GM12878 (cell line): ENCODE measurements at regions of chr19 and their contacts with region 1.

Region 1: GRCh38 chr19:38464421-38465082 is 31.1 kb downstream of the RYR1 start:
- DNase-seq: no peak
- ATAC-seq: no peak
- H3K4me3 ChIP-seq: no peak overlapping the region
- H3K27ac ChIP-seq: no peak overlapping the region
- H3K4me1 ChIP-seq: no peaks in the 10 kb centered on the region
- H3K27me3 ChIP-seq: no peaks in the 10 kb centered on the region; a peak in 1 of 4 replicates
- CTCF ChIP-seq: no peak
- EP300 ChIP-seq: no peak
- POLR2A ChIP-seq: no peak
- RAD21 ChIP-seq: no peak

Region 2: DNA sequence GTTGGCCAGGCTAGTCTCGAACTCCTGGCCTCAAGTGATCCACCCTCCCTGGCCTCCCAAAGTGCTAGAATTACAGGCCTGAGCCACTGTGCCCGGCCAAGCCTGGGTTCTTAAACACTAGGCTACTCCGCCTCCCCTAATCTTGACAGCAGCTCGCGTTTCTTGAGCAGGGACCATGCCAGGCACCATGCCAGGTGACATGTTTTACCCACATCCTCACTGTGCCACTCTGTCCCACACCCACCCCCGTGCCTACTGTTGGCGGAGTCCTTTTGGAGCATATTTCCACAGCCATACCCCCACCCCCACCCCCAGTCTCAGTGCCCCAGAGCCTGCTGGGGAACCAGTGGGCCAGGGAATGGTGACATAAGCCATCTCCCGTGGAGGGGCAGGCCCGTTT is 339.3 kb before region 1 on chr19:
- CTCF ChIA-PET with region 1: no interaction called
- POLR2A ChIA-PET with region 1: no interaction called
- RAD21 ChIA-PET with region 1: no interaction called
- SMC1A ChIA-PET with region 1: no interaction called
- in situ Hi-C with region 1: no loop called
- intact Hi-C with region 1: no loop called
- DNase-seq: no peak
- ATAC-seq: no peak
- H3K4me3 ChIP-seq: no peak overlapping the region
- H3K27ac ChIP-seq: no peak overlapping the region
- H3K4me1 ChIP-seq: no peaks in the 10 kb centered on the region
- H3K27me3 ChIP-seq: no peaks in the 10 kb centered on the region
- CTCF ChIP-seq: no peak
- EP300 ChIP-seq: no peak
- POLR2A ChIP-seq: no peak
- RAD21 ChIP-seq: no peak

Region 3: GRCh38 chr19:38263689-38264485 is 200.7 kb before region 1 on chr19:
- CTCF ChIA-PET with region 1: no interaction called
- POLR2A ChIA-PET with region 1: no interaction called
- RAD21 ChIA-PET with region 1: no interaction called
- SMC1A ChIA-PET with region 1: no interaction called
- in situ Hi-C with region 1: no loop called
- intact Hi-C with region 1: no loop called
- DNase-seq: no peak
- ATAC-seq: peak; percentile 83
- H3K4me3 ChIP-seq: peak overlapping the region; percentile 62; the same call in 1 of the 2 replicates
- H3K27ac ChIP-seq: no peak overlapping the region
- H3K4me1 ChIP-seq: peaks cover 9% of the 10 kb centered on the region
- H3K27me3 ChIP-seq: peaks cover 0 to 2% of the 10 kb centered on the region in 2 experiments; a peak in 2 of 4 replicates
- CTCF ChIP-seq: no peak
- EP300 ChIP-seq: no peak
- POLR2A ChIP-seq: no peak
- RAD21 ChIP-seq: no peak

Region 4: DNA sequence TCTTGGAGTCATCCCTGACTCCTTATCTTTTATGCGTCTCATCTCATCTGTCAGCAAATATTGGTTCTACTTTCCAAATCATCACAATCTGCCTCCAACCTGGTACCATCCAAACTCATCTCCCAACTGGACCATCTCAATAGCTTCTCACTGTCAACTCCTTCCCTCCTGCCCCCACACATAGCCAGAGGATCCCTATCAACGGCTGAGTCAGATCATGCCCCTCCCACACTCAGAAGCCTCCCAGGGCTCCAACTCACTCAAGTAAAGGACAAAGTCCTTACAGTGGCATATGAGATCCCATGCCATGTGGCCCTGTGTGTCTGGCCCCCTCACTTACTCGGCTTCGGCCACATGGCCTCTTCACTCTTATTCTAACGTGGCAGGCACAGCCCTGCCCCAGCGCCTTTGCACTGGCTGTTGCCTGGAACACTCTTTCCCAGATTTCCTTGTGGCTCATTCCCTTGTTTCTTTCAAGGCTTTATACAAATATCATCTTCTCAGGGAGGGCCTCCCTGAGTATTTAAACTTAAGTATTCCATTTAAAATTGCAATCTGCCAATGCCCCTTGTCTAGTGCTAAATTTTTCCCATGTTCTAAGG is 71.7 kb before region 1 on chr19:
- CTCF ChIA-PET with region 1: no interaction called
- POLR2A ChIA-PET with region 1: interaction called, 10 read pairs
- RAD21 ChIA-PET with region 1: no interaction called
- SMC1A ChIA-PET with region 1: no interaction called
- in situ Hi-C with region 1: no loop called
- intact Hi-C with region 1: no loop called
- DNase-seq: no peak
- ATAC-seq: no peak
- H3K4me3 ChIP-seq: no peak overlapping the region
- H3K27ac ChIP-seq: no peak overlapping the region
- H3K4me1 ChIP-seq: peaks cover 5% of the 10 kb centered on the region; the same call in 1 of the 2 replicates
- H3K27me3 ChIP-seq: peaks cover 2 to 5% of the 10 kb centered on the region in 2 experiments; a peak in 3 of 4 replicates
- CTCF ChIP-seq: no peak
- EP300 ChIP-seq: no peak
- POLR2A ChIP-seq: no peak
- RAD21 ChIP-seq: no peak